H1 (cell line): ENCODE measurements at regions of chr13 and their contacts with region 1.

Region 1: GRCh38 chr13:110925023-110925612 is 10.2 kb upstream of the ANKRD10 start:
- DNase-seq: peak in 1 of 2 experiments; percentile 49
- H3K4me3 ChIP-seq: no peak overlapping the region
- H3K27ac ChIP-seq: no peak overlapping the region
- H3K4me1 ChIP-seq: peaks cover 0 to 8% (median 2%) of the 10 kb centered on the region in 4 experiments; a peak in 2 of 7 replicates
- H3K27me3 ChIP-seq: no peaks in the 10 kb centered on the region
- CTCF ChIP-seq: peak; percentile 33 to 70 (median 61)
- EP300 ChIP-seq: no peak
- POLR2A ChIP-seq: no peak
- RAD21 ChIP-seq: peak; percentile 74 to 77

Region 2: GRCh38 chr13:110874508-110874960 is 50.6 kb before region 1 on chr13:
- CTCF ChIA-PET with region 1: interaction called, 14 read pairs
- POLR2A ChIA-PET with region 1: no interaction called
- DNase-seq: peak in 1 of 2 experiments; percentile 93
- H3K4me3 ChIP-seq: peak overlapping the region; percentile 35 to 57 (median 46)
- H3K27ac ChIP-seq: no peak overlapping the region
- H3K4me1 ChIP-seq: peaks cover 0 to 21% (median 11%) of the 10 kb centered on the region in 4 experiments; a peak in 5 of 7 replicates
- H3K27me3 ChIP-seq: 0 out of 7 replicates have a peak, but pooled peaks cover 0 to 5% (median under 1%) of the 10 kb centered on the region in 4 experiments
- CTCF ChIP-seq: no peak
- EP300 ChIP-seq: no peak
- POLR2A ChIP-seq: no peak
- RAD21 ChIP-seq: no peak

Region 3: GRCh38 chr13:111076156-111077013 is 151.3 kb after region 1 on chr13:
- CTCF ChIA-PET with region 1: no interaction called
- POLR2A ChIA-PET with region 1: no interaction called
- DNase-seq: no peak
- H3K4me3 ChIP-seq: no peak overlapping the region; a peak in 1 of 8 replicates
- H3K27ac ChIP-seq: no peak overlapping the region
- H3K4me1 ChIP-seq: no peaks in the 10 kb centered on the region; a peak in 2 of 7 replicates
- H3K27me3 ChIP-seq: no peaks in the 10 kb centered on the region
- CTCF ChIP-seq: peak; percentile 50 to 67 (median 64)
- EP300 ChIP-seq: no peak
- POLR2A ChIP-seq: no peak
- RAD21 ChIP-seq: peak in 1 of 2 experiments; percentile 33; a peak in 1 of 4 replicates

Region 4: GRCh38 chr13:111153279-111153976 is 228.3 kb after region 1 on chr13:
- CTCF ChIA-PET with region 1: no interaction called
- POLR2A ChIA-PET with region 1: no interaction called
- DNase-seq: peak; percentile 60 to 99
- H3K4me3 ChIP-seq: peak overlapping the region; percentile 73 to 86 (median 78)
- H3K27ac ChIP-seq: peak overlapping the region; percentile 89
- H3K4me1 ChIP-seq: peaks cover 0 to 6% (median 0%) of the 10 kb centered on the region in 4 experiments; a peak in 1 of 7 replicates
- H3K27me3 ChIP-seq: peaks cover 0 to 1% (median 0%) of the 10 kb centered on the region in 4 experiments; a peak in 1 of 7 replicates
- CTCF ChIP-seq: peak in 2 of 3 experiments; percentile 18 to 42; a peak in 2 of 4 replicates
- EP300 ChIP-seq: no peak
- POLR2A ChIP-seq: peak; percentile 87
- RAD21 ChIP-seq: peak in 1 of 2 experiments; percentile 41; a peak in 2 of 4 replicates

Region 5: GRCh38 chr13:111304041-111304544 is 379.0 kb after region 1 on chr13:
- CTCF ChIA-PET with region 1: no interaction called
- POLR2A ChIA-PET with region 1: no interaction called
- DNase-seq: no peak
- H3K4me3 ChIP-seq: no peak overlapping the region
- H3K27ac ChIP-seq: no peak overlapping the region
- H3K4me1 ChIP-seq: no peaks in the 10 kb centered on the region
- H3K27me3 ChIP-seq: no peaks in the 10 kb centered on the region
- CTCF ChIP-seq: no peak
- EP300 ChIP-seq: no peak
- POLR2A ChIP-seq: no peak
- RAD21 ChIP-seq: no peak